Calu3 (cell line): ENCODE measurements at regions of chr11 and their contacts with region 1.

Region 1: GRCh38 chr11:9861860-9862725 is 198.2 kb downstream of the SWAP70 start:
- DNase-seq: peak; percentile 61
- H3K4me3 Mint-ChIP-seq: no peak overlapping the region
- H3K27ac Mint-ChIP-seq: no peak overlapping the region
- H3K4me1 Mint-ChIP-seq: peaks cover 8% of the 10 kb centered on the region
- H3K27me3 Mint-ChIP-seq: no peaks in the 10 kb centered on the region
- CTCF ChIP-seq: peak; percentile 68

Region 2: DNA sequence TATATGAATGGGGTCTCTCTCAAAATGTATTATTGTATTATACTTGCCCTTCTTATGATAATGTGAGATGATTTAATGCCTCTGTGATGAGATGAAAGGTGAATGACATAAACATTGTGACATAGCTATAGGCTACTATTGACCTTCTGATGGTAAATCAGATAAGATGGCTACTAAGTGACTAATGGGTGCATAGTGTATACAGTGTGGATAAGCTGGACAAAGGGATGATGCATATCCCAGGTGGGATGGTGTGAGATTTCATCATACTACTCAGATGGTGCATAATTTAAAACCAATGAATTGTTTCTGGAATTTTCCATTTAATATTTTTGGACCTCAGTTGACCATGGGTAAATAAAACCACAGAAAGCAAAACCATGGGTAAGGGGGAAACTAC is 188.5 kb after region 1 on chr11:
- CTCF ChIA-PET with region 1: no interaction called
- intact Hi-C with region 1: loop called (anchors 10 kb)
- DNase-seq: no peak
- H3K4me3 Mint-ChIP-seq: no peak overlapping the region
- H3K27ac Mint-ChIP-seq: no peak overlapping the region
- H3K4me1 Mint-ChIP-seq: peaks cover 9% of the 10 kb centered on the region
- H3K27me3 Mint-ChIP-seq: no peaks in the 10 kb centered on the region
- CTCF ChIP-seq: no peak